MCF 10A (cell line): ENCODE measurements at regions of chr3 and their contacts with region 1.

Region 1: GRCh38 chr3:45123030-45123429 is 23.1 kb downstream of the CDCP1 start:
- DNase-seq: peak; percentile 91
- H3K4me3 Mint-ChIP-seq: peak overlapping the region; percentile 19
- H3K27ac Mint-ChIP-seq: peak overlapping the region; percentile 80
- H3K4me1 Mint-ChIP-seq: peaks cover 64% of the 10 kb centered on the region
- H3K27me3 Mint-ChIP-seq: no peaks in the 10 kb centered on the region
- CTCF ChIP-seq: no peak

Region 2: GRCh38 chr3:44932986-44933944 is 189.8 kb before region 1 on chr3:
- CTCF ChIA-PET with region 1: no interaction called
- POLR2A ChIA-PET with region 1: no interaction called
- intact Hi-C with region 1: no loop called
- DNase-seq: no peak
- H3K4me3 Mint-ChIP-seq: no peak overlapping the region
- H3K27ac Mint-ChIP-seq: no peak overlapping the region
- H3K4me1 Mint-ChIP-seq: no peaks in the 10 kb centered on the region
- H3K27me3 Mint-ChIP-seq: no peaks in the 10 kb centered on the region
- CTCF ChIP-seq: no peak

Region 3: DNA sequence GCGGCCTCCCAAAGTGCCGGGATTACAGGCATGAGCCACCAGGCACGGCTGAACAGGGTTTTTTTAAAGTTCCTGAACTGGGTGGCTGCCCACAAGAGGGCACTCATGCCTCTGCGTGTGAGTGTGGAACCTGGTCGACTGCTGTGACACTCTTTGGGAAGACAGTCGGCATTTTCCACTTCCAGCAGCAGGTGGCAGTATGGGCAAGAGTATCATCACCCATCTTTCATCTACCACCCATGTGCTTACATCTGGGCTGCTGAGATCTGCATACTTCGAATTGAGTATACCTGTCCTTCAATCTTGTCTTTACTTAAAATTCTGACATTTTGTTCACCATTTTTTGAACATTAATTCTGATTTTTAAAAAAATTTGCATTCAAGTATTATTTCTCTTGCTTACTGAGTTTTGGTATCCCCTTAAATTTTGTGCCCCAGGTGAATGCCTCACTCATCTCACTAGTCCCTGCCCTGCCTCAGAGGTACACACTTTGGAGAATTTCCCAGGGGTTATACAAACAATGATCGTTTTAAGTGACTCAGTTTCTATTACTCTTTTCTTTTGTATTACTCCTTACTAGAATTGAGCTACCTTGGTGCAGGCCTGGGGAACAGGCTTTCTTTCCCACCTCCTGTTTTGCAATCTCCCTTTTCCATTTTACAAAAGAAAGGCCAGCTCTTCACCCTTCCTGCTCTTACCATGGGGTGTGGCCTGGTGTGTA is 85.1 kb before region 1 on chr3:
- CTCF ChIA-PET with region 1: interaction called, 8 read pairs
- POLR2A ChIA-PET with region 1: interaction called, 3 read pairs
- intact Hi-C with region 1: loop called (anchors 1 kb)
- DNase-seq: peak; percentile 97
- H3K4me3 Mint-ChIP-seq: no peak overlapping the region
- H3K27ac Mint-ChIP-seq: no peak overlapping the region
- H3K4me1 Mint-ChIP-seq: peaks cover 4% of the 10 kb centered on the region
- H3K27me3 Mint-ChIP-seq: no peaks in the 10 kb centered on the region
- CTCF ChIP-seq: peak; percentile 82

Region 4: GRCh38 chr3:45112939-45113338 is 10.1 kb before region 1 on chr3:
- CTCF ChIA-PET with region 1: interaction called, 3 read pairs
- POLR2A ChIA-PET with region 1: interaction called, 11 read pairs
- intact Hi-C with region 1: no loop called
- DNase-seq: peak; percentile 50
- H3K4me3 Mint-ChIP-seq: no peak overlapping the region
- H3K27ac Mint-ChIP-seq: peak overlapping the region; percentile 74
- H3K4me1 Mint-ChIP-seq: peaks cover 10% of the 10 kb centered on the region
- H3K27me3 Mint-ChIP-seq: no peaks in the 10 kb centered on the region
- CTCF ChIP-seq: no peak

Region 5: DNA sequence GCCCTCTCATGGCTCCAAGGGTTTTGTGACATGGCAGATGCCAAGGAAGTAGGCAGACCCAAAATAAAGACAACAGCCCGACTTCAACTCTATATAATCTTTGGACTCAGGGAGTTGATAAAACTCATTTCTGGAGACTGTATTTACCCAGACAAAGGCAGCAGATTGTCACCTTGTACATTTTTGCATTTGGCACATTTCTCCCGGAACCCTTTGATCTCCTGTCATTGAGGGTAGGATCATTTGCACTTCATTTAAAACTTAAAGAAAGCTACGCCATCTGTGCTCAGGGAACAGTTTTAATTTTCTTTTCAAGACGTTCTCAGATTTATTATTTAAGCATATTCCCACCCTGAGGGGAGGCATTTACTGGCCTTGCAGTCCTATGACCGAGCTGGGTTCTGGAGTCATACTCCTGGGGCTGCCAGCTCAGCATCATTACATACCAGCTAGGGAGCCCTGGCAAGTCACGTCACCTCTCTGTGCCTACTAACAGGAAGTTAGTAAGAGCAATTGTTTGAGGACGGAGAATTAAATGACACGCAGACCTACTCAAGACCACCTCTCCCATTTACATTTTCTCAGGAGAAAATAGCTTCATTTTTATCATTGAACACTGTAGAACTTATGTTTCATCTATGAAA is 17.2 kb after region 1 on chr3:
- CTCF ChIA-PET with region 1: interaction called, 16 read pairs
- POLR2A ChIA-PET with region 1: interaction called, 192 read pairs
- intact Hi-C with region 1: no loop called
- DNase-seq: peak; percentile 62
- H3K4me3 Mint-ChIP-seq: no peak overlapping the region
- H3K27ac Mint-ChIP-seq: peak overlapping the region; percentile 77
- H3K4me1 Mint-ChIP-seq: peaks cover 68% of the 10 kb centered on the region
- H3K27me3 Mint-ChIP-seq: no peaks in the 10 kb centered on the region
- CTCF ChIP-seq: no peak

Region 6: DNA sequence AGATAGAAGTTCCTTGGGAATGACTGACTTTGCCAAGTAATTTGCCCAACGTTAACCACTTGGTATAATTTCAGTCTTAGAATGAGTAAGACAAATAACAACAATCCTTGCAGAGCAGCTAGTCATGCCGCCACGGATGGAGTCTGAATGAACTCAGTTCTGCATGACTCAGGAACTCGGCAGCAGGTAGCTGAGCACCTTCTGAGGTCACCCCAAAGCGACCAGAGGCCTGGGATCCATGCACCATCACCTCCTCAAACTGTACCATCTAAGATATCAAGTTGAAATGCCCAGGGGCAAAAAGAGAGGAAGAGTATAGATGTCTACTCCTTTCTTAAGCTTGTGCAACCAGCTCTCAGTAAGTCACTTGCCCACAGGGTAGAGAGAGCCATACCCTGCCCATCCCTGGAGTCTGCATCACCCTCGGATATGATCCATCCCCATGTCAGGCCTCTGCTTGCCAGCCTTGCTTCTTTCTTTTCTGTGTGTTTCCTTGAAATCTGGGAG is 31.7 kb after region 1 on chr3:
- CTCF ChIA-PET with region 1: no interaction called
- POLR2A ChIA-PET with region 1: interaction called, 192 read pairs
- intact Hi-C with region 1: no loop called
- DNase-seq: peak; percentile 75
- H3K4me3 Mint-ChIP-seq: no peak overlapping the region
- H3K27ac Mint-ChIP-seq: peak overlapping the region; percentile 63
- H3K4me1 Mint-ChIP-seq: peaks cover 12% of the 10 kb centered on the region
- H3K27me3 Mint-ChIP-seq: no peaks in the 10 kb centered on the region
- CTCF ChIP-seq: no peak

Region 7: GRCh38 chr3:45182915-45183867 is 60.2 kb after region 1 on chr3:
- CTCF ChIA-PET with region 1: no interaction called
- POLR2A ChIA-PET with region 1: interaction called, 18 read pairs
- intact Hi-C with region 1: loop called (anchors 5 kb)
- DNase-seq: peak; percentile 94
- H3K4me3 Mint-ChIP-seq: no peak overlapping the region
- H3K27ac Mint-ChIP-seq: peak overlapping the region; percentile 93
- H3K4me1 Mint-ChIP-seq: peaks cover 36% of the 10 kb centered on the region
- H3K27me3 Mint-ChIP-seq: no peaks in the 10 kb centered on the region
- CTCF ChIP-seq: no peak

Region 8: GRCh38 chr3:45269952-45270351 is 146.9 kb after region 1 on chr3:
- CTCF ChIA-PET with region 1: no interaction called
- POLR2A ChIA-PET with region 1: no interaction called
- intact Hi-C with region 1: no loop called
- DNase-seq: no peak
- H3K4me3 Mint-ChIP-seq: no peak overlapping the region
- H3K27ac Mint-ChIP-seq: no peak overlapping the region
- H3K4me1 Mint-ChIP-seq: no peaks in the 10 kb centered on the region
- H3K27me3 Mint-ChIP-seq: peaks cover 39% of the 10 kb centered on the region
- CTCF ChIP-seq: no peak